ENCODE measurements at regions of chr1 and their contacts with region 1.

Region 1: DNA sequence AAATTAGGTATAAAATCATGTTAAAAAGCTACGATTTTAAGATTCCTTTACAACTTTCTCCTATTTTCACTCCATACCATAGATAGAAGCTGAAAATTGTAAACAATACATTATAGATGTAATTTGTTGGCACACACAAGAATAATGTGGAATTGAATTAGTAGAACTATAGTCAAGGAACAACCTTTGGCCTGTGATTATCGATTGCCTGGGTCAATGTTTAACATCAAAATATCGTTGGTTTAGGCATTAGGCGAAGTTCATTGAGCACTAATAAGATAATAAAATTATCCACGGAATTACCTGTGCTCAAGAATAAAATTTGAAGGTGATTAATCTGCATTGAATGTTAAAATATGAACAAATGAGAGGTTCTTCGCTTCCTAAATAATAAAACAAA is 455.1 kb upstream of the ZP4 start:
- DNase-seq: no peak
- ATAC-seq: no peak
- H3K4me3 ChIP-seq: no peak overlapping the region
- H3K4me3 Mint-ChIP-seq: no peak overlapping the region
- H3K27ac ChIP-seq: no peak overlapping the region
- H3K27ac Mint-ChIP-seq: no peak overlapping the region
- H3K4me1 ChIP-seq: no peaks in the 10 kb centered on the region
- H3K4me1 Mint-ChIP-seq: no peaks in the 10 kb centered on the region
- H3K27me3 ChIP-seq: no peaks in the 10 kb centered on the region
- H3K27me3 Mint-ChIP-seq: no peaks in the 10 kb centered on the region

Region 2: GRCh38 chr1:239976130-239976968 is 1630.5 kb after region 1 on chr1:
- CTCF ChIA-PET with region 1: no interaction called
- POLR2A ChIA-PET with region 1: interaction called in 1 of 2 experiments, 11 read pairs
- DNase-seq: peak in 26 of 35 experiments; percentile 4 to 58 (median 25)
- ATAC-seq: no peak
- H3K4me3 ChIP-seq: no peak overlapping the region
- H3K4me3 Mint-ChIP-seq: no peak overlapping the region
- H3K27ac ChIP-seq: no peak overlapping the region
- H3K27ac Mint-ChIP-seq: no peak overlapping the region
- H3K4me1 ChIP-seq: no peaks in the 10 kb centered on the region
- H3K4me1 Mint-ChIP-seq: no peaks in the 10 kb centered on the region
- H3K27me3 ChIP-seq: peaks cover 0 to 1% of the 10 kb centered on the region in 2 experiments
- H3K27me3 Mint-ChIP-seq: peaks cover 2 to 3% of the 10 kb centered on the region in 2 donors